IMR-90 (cell line): ENCODE measurements at regions of chr3 and their contacts with region 1.

Region 1: DNA sequence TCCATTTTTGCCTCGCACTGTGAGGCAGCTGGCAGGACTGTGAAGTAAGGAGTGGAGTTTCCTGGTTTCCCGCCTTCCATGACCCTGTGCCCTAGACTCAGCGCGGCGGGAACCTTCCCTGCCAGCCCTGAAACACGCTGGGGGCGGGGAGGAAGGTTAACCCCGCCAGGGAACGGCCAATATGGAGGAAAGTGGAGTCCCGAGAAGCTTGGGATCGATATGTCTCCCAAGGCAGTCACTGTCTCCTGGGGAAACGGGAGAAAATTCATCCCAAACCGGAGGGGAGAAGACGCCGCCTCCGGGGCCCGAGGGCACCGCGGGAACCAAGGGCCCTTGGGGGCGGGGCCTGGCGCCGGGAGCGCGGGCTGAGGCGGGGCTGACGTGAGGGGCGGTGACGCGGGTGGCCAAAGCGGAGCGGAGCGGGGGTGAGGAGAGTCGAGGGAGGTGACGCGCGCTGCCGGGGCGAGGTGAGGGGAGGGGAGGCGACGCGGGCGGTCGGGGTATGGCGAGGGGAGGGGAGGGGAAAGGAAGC is at the start of gene HMCES:
- DNase-seq: peak; percentile 81
- ATAC-seq: peak; percentile 95
- H3K4me3 ChIP-seq: peak within 1 kb of the TSS; percentile 83
- H3K27ac ChIP-seq: peak within 1 kb of the TSS; percentile 68
- H3K4me1 ChIP-seq: peaks cover 7% of the 10 kb centered on the region; the same call in 1 of the 2 replicates
- H3K27me3 ChIP-seq: no peaks in the 10 kb centered on the region
- CTCF ChIP-seq: 0 out of 2 replicates have a peak, but pooled peaks have one; percentile 2
- POLR2A ChIP-seq: no peak
- RAD21 ChIP-seq: no peak
- total RNA-seq, gene HMCES: 25.8 and 26.0 TPM in 2 replicates

Region 2: GRCh38 chr3:128824132-128824850 is 454.2 kb before region 1 on chr3:
- CTCF ChIA-PET with region 1: no interaction called
- POLR2A ChIA-PET with region 1: no interaction called
- dilution Hi-C with region 1: no loop called
- in situ Hi-C with region 1: no loop called
- intact Hi-C with region 1: no loop called
- DNase-seq: no peak
- ATAC-seq: peak; percentile 19; the same call in 1 of the 2 replicates
- H3K4me3 ChIP-seq: no peak overlapping the region
- H3K27ac ChIP-seq: no peak overlapping the region
- H3K4me1 ChIP-seq: no peaks in the 10 kb centered on the region
- H3K27me3 ChIP-seq: no peaks in the 10 kb centered on the region
- CTCF ChIP-seq: no peak
- POLR2A ChIP-seq: no peak
- RAD21 ChIP-seq: no peak

Region 3: DNA sequence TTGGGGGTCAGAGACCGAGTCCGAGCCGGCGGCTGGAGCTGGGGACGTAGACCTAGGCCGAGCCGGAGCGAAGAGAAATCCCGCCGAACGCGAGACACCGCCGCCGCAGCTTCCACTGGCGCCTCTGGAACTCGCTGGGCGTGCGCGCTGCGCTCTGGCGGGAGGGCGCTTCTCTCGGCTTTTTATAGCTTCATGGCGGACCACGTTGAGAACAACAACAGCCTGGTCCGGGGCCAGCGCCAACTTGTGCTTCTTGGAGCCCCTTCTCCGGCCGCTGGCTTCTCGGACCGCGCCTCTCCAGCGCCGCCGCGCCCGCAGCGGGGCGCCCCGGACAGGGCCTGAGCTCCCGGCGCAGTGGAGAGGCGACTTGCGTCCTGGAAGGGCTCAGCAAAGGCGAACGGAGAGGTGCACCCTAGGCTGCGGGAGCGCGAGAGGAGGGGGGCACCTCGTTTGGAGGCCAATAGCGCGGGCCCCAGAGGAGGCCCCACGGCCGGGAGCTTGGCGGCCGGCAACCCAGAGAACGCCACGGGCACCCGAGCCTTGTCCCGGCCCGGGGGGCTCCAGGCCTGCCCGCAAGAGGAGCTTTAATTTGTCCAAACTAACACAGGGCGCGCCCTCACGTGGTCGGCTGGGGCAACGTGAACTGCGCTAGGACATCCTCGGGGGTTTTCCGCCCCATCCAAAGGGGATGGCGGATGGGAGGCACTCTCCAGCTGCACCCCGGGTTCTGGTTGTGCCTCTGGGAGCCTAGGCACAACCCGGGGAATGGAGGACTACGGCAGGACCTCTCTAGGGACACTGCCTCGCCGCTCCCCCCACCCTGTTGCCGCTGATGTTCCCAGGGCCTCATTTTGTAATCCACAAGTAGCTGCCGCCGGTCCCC is 37.9 kb after region 1 on chr3:
- CTCF ChIA-PET with region 1: interaction called, 6 read pairs
- POLR2A ChIA-PET with region 1: no interaction called
- dilution Hi-C with region 1: no loop called
- in situ Hi-C with region 1: no loop called
- intact Hi-C with region 1: loop called (anchors 1 kb)
- DNase-seq: peak; percentile 76
- ATAC-seq: peak; percentile 61
- H3K4me3 ChIP-seq: peak overlapping the region; percentile 91
- H3K27ac ChIP-seq: peak overlapping the region; percentile 73
- H3K4me1 ChIP-seq: peaks cover 6% of the 10 kb centered on the region; the same call in 1 of the 2 replicates
- H3K27me3 ChIP-seq: no peaks in the 10 kb centered on the region
- CTCF ChIP-seq: peak; percentile 44; the same call in 1 of the 2 replicates
- POLR2A ChIP-seq: peak; percentile 100
- RAD21 ChIP-seq: peak; percentile 39